Colonic mucosa (tissue), 4 donors: ENCODE measurements at regions of chr16 and their contacts with region 1.

Region 1: GRCh38 chr16:4358831-4359561 is 7.9 kb upstream of the PAM16 start:
- DNase-seq: peak; percentile 56
- H3K4me3 ChIP-seq: no peak overlapping the region
- H3K27ac ChIP-seq: no peak overlapping the region
- H3K4me1 ChIP-seq: no peaks in the 10 kb centered on the region
- H3K27me3 ChIP-seq: no peaks in the 10 kb centered on the region
- CTCF ChIP-seq: peak; percentile 92

Region 2: GRCh38 chr16:4402439-4403132 is 43.6 kb after region 1 on chr16:
- intact Hi-C with region 1: loop called (anchors 1 kb)
- DNase-seq: peak; percentile 82
- H3K4me3 ChIP-seq: no peak overlapping the region
- H3K27ac ChIP-seq: no peak overlapping the region
- H3K4me1 ChIP-seq: peaks cover 4% of the 10 kb centered on the region
- H3K27me3 ChIP-seq: no peaks in the 10 kb centered on the region
- CTCF ChIP-seq: peak; percentile 95

Region 3: GRCh38 chr16:4416200-4417032 is 57.4 kb after region 1 on chr16 and contains the start of gene CORO7:
- intact Hi-C with region 1: no loop called
- DNase-seq: peak; percentile 99
- H3K4me3 ChIP-seq: peak within 1 kb of the TSS; percentile 86
- H3K27ac ChIP-seq: peak within 1 kb of the TSS; percentile 84
- H3K4me1 ChIP-seq: no peaks in the 10 kb centered on the region
- H3K27me3 ChIP-seq: no peaks in the 10 kb centered on the region
- CTCF ChIP-seq: no peak
- total RNA-seq, gene CORO7: 37.2 to 55.9 TPM

Region 4: DNA sequence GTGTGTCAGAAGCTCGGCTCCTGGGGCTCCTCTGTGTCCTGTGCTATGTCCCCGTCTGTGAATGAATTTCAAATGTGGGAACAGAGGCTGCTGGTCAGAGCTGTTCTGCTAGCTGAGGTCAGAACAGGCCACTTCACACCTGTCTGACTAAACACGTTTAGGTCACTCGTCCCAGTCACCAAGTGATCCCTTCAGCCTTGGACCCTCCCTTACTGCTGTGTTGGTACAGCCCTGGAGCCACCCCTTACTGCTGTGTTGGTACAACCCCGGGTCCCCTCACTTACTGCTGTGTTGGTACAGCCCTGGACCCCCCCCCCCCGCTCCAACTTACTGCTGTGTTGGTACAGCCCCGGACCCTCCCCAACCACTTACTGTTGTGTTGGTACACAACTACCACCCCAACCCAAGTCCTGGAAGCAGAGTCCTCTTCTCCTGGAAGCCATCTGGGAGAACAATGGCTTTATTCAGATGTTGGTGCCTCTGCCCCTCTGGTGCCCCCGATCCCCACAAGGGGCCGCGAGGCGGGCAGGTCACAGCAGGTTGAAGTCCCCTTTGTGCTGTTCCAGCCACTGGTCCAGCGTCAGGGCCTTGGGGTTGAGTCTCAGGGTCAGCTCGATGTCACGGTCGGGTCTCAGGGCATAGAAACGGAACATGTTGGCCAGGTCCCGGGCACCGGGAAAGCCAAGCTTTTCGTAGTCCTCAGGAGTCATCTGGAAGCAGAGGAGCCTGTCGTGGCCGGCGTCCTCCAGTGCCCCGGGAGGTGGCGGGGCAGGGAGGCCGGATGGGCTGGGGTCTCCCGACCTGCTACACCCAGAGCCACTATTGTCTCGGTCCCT is 102.5 kb after region 1 on chr16:
- intact Hi-C with region 1: no loop called
- DNase-seq: no peak
- H3K4me3 ChIP-seq: no peak overlapping the region
- H3K27ac ChIP-seq: no peak overlapping the region
- H3K4me1 ChIP-seq: no peaks in the 10 kb centered on the region
- H3K27me3 ChIP-seq: no peaks in the 10 kb centered on the region
- CTCF ChIP-seq: no peak